ENCODE measurements at regions of chr19 and their contacts with region 1.

Region 1: GRCh38 chr19:1825909-1826556 is 14.0 kb upstream of the ATP8B3 start:
- DNase-seq: peak; percentile 59 to 84 (median 70)
- H3K4me3 ChIP-seq: no peak overlapping the region
- H3K4me3 Mint-ChIP-seq: no peak overlapping the region
- H3K27ac ChIP-seq: peak overlapping the region; percentile 51
- H3K27ac Mint-ChIP-seq: no peak overlapping the region
- H3K4me1 ChIP-seq: peaks cover 9% of the 10 kb centered on the region
- H3K4me1 Mint-ChIP-seq: peaks cover 0 to 11% (median 4%) of the 10 kb centered on the region in 3 donors
- H3K27me3 ChIP-seq: no peaks in the 10 kb centered on the region
- H3K27me3 Mint-ChIP-seq: peaks cover 0 to 2% of the 10 kb centered on the region in 2 donors

Region 2: GRCh38 chr19:1782486-1782988 is 43.5 kb before region 1 on chr19:
- CTCF ChIA-PET with region 1: interaction called, 12 read pairs
- POLR2A ChIA-PET with region 1: no interaction called
- DNase-seq: no peak
- H3K4me3 ChIP-seq: no peak overlapping the region
- H3K4me3 Mint-ChIP-seq: no peak overlapping the region
- H3K27ac ChIP-seq: no peak overlapping the region
- H3K27ac Mint-ChIP-seq: no peak overlapping the region
- H3K4me1 ChIP-seq: no peaks in the 10 kb centered on the region
- H3K4me1 Mint-ChIP-seq: no peaks in the 10 kb centered on the region
- H3K27me3 ChIP-seq: peaks cover 17% of the 10 kb centered on the region
- H3K27me3 Mint-ChIP-seq: peaks cover 45 to 64% of the 10 kb centered on the region in 2 donors

Region 3: DNA sequence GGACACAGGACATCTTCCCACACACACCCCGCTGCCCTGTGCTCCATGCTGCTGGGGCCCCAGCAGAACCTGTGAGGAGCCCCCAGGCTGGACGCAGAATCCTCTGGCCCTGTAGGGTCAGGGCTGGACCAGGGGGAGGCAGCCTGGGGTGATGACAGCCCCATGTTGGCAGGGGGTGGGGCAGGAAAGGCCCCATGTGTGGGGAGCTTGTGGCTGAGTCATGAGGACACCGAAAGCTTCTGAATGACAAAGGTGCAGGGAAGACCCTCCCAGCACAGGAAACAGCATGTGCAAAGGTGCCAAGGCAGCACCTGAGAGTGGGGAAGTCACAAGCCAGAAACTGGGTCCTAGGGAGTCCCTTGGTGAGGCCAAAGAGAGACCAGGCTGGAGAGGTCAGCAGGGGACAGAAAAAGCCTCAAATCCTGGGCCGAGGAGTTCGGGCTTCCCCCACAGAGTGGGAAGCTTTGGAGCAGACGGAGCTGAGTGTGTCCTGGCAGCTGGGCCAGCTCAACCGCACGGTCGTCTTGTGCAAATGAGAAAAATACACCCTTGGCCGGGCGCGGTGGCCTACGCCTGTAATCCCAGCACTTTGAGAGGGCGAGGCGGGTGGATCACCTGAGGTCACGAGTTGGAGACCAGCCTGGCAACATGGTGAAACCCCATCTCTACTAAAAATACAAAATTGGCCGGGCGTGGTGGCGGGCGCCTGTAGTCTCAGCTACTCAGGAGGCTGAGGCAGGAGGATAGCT is 31.4 kb before region 1 on chr19:
- CTCF ChIA-PET with region 1: interaction called, 28 read pairs
- POLR2A ChIA-PET with region 1: no interaction called
- DNase-seq: no peak
- H3K4me3 ChIP-seq: no peak overlapping the region
- H3K4me3 Mint-ChIP-seq: no peak overlapping the region
- H3K27ac ChIP-seq: no peak overlapping the region
- H3K27ac Mint-ChIP-seq: no peak overlapping the region
- H3K4me1 ChIP-seq: peaks cover 4% of the 10 kb centered on the region
- H3K4me1 Mint-ChIP-seq: peaks cover 0 to 5% (median 5%) of the 10 kb centered on the region in 3 donors
- H3K27me3 ChIP-seq: no peaks in the 10 kb centered on the region
- H3K27me3 Mint-ChIP-seq: peaks cover 8 to 11% of the 10 kb centered on the region in 2 donors

Region 4: DNA sequence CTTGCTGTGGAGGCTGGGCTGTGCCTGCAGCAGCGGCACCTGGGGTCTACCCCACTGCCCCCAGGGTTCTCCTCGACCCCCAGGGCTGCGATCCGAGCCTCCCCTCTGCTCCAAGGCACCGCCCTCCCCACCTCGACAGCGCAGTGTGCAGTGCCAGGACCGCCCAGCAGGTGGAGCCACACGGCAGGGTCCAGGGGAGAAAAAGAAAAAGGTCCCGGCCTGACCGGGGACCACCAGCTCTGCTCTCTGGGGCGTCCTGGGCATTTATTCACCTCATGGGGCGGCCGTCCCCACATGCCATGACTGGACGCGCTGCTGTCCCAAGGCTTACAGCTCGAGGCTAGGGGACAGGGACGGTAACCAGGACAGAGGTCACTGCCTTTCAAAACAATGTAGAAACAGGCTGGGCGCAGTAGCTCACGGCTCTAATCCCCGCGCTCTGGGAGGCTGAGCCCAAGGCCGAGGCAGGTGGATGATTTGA is 11.6 kb after region 1 on chr19:
- CTCF ChIA-PET with region 1: interaction called, 36 read pairs
- POLR2A ChIA-PET with region 1: no interaction called
- DNase-seq: peak in 4 of 5 donors; percentile 46 to 66 (median 52)
- H3K4me3 ChIP-seq: no peak overlapping the region
- H3K4me3 Mint-ChIP-seq: peak overlapping the region in 1 of 7 donors; percentile 68
- H3K27ac ChIP-seq: peak overlapping the region; percentile 70
- H3K27ac Mint-ChIP-seq: peak overlapping the region in 1 of 8 donors; percentile 14
- H3K4me1 ChIP-seq: peaks cover 7% of the 10 kb centered on the region
- H3K4me1 Mint-ChIP-seq: peaks cover 24 to 60% (median 27%) of the 10 kb centered on the region in 3 donors
- H3K27me3 ChIP-seq: no peaks in the 10 kb centered on the region
- H3K27me3 Mint-ChIP-seq: no peaks in the 10 kb centered on the region

Measured in CD8-positive, alpha-beta memory T cell (primary cell).